Common myeloid progenitor, CD34-positive (primary cell): ENCODE measurements at regions of chr2 and their contacts with region 1.

Region 1: DNA sequence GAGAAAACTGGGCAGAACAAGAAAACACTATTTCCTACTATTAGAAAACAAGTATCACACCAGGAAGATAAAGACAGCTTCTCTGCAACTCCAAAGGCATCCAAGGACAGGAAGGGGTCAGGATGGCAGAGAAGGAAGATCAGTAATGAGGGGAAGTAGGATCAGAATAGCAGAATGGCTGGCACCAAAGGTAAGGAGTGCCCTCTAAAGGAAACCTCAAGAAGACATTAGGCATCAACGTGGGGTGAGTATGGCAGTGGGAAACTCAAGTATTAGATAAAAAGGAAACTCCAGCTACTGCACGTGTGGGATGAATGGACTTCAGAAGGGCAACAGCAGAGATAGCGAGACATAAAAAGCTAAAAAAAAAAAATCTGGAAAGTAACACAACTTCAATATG is 25.9 kb downstream of the HDLBP start:
- DNase-seq: peak in 1 of 3 donors; percentile 21
- H3K4me3 ChIP-seq: no peak overlapping the region
- H3K27ac ChIP-seq: no peak overlapping the region
- H3K4me1 ChIP-seq: peaks cover 2 to 25% (median 10%) of the 10 kb centered on the region in 4 experiments
- H3K27me3 ChIP-seq: no peaks in the 10 kb centered on the region

Region 2: DNA sequence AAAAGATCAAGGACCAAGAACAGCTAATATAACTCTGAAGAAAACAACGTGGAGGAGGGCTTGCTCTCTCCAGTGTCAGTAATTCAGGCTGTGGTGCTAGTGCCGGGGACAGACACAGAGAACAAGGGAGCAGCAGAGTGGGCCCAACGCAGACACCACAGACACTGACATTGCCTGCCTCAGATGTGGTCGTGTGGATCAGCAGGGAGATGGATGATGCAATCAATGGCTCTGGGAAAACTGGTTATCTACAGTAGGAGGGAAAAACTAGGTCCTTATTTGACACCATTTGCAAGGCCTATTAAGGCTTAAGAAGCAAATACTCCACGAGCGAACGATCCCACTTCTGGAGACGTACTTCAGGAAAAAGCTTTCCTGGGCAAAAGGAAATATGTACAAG is 10.2 kb before region 1 on chr2:
- CTCF ChIA-PET with region 1: interaction called, 10 read pairs
- POLR2A ChIA-PET with region 1: no interaction called
- DNase-seq: no peak
- H3K4me3 ChIP-seq: no peak overlapping the region
- H3K27ac ChIP-seq: no peak overlapping the region
- H3K4me1 ChIP-seq: peaks cover 0 to 15% (median 0%) of the 10 kb centered on the region in 4 experiments
- H3K27me3 ChIP-seq: no peaks in the 10 kb centered on the region

Region 3: GRCh38 chr2:241499146-241499965 is 209.8 kb after region 1 on chr2:
- CTCF ChIA-PET with region 1: no interaction called
- POLR2A ChIA-PET with region 1: no interaction called
- DNase-seq: no peak
- H3K4me3 ChIP-seq: no peak overlapping the region
- H3K27ac ChIP-seq: no peak overlapping the region
- H3K4me1 ChIP-seq: no peaks in the 10 kb centered on the region
- H3K27me3 ChIP-seq: no peaks in the 10 kb centered on the region